ENCODE measurements at regions of chr6 and their contacts with region 1.

Region 1: GRCh38 chr6:30533460-30534294 is 22.6 kb downstream of the GNL1 start:
- DNase-seq: no peak
- H3K4me3 Mint-ChIP-seq: no peak overlapping the region
- H3K27ac Mint-ChIP-seq: no peak overlapping the region
- H3K4me1 Mint-ChIP-seq: peaks cover 35% of the 10 kb centered on the region
- H3K27me3 Mint-ChIP-seq: peaks cover 1% of the 10 kb centered on the region

Region 2: DNA sequence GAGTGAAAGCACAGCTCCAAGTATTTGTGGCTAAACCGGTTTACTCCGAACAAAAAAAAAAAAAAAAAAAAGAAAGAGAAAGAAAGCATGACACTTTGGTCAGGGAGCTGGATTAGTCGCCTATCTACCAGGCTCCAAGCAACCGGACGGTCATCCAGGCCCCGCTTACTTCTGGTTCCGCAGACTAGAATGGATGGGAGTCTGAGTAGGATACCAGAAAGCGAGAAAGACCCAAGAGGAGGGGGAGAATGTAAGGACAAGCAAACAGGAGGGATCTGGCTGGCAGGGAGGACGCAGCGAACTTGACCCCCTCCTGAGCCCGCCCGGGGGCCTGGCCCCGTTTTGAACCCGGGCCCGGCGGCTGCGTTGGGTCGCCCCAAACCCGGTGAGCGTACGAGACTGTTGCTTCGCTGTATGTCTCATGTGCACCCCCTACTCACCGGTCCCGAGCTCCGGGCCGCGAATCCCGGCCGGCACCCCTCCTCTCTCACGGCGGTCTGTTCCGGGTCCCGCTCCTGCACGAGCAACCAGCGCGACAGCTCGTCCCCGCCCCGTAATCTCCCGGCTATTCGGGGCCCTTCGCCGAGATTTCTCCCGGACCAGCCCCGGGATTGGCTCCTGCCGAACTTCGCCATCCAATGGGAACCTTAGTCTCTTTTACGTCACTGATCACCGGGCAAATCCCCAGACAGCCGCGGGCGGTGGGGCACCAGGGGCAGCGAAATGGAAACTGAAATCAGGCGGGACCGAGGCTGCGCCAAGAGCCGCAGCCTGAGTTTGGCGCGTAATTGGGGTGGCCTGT is 320.6 kb before region 1 on chr6 and contains the start of gene TRIM26:
- intact Hi-C with region 1: loop called (anchors 5 kb)
- DNase-seq: peak; percentile 98
- H3K4me3 Mint-ChIP-seq: peak within 1 kb of the TSS; percentile 96
- H3K27ac Mint-ChIP-seq: peak within 1 kb of the TSS; percentile 97
- H3K4me1 Mint-ChIP-seq: peaks cover 48% of the 10 kb centered on the region
- H3K27me3 Mint-ChIP-seq: no peaks in the 10 kb centered on the region
- total RNA-seq, gene TRIM26: 49.9 and 51.5 TPM in 2 replicates

Region 3: GRCh38 chr6:30304002-30304401 is 229.7 kb before region 1 on chr6:
- intact Hi-C with region 1: no loop called
- DNase-seq: no peak
- H3K4me3 Mint-ChIP-seq: no peak overlapping the region
- H3K27ac Mint-ChIP-seq: no peak overlapping the region
- H3K4me1 Mint-ChIP-seq: peaks cover 4% of the 10 kb centered on the region
- H3K27me3 Mint-ChIP-seq: no peaks in the 10 kb centered on the region

Region 4: DNA sequence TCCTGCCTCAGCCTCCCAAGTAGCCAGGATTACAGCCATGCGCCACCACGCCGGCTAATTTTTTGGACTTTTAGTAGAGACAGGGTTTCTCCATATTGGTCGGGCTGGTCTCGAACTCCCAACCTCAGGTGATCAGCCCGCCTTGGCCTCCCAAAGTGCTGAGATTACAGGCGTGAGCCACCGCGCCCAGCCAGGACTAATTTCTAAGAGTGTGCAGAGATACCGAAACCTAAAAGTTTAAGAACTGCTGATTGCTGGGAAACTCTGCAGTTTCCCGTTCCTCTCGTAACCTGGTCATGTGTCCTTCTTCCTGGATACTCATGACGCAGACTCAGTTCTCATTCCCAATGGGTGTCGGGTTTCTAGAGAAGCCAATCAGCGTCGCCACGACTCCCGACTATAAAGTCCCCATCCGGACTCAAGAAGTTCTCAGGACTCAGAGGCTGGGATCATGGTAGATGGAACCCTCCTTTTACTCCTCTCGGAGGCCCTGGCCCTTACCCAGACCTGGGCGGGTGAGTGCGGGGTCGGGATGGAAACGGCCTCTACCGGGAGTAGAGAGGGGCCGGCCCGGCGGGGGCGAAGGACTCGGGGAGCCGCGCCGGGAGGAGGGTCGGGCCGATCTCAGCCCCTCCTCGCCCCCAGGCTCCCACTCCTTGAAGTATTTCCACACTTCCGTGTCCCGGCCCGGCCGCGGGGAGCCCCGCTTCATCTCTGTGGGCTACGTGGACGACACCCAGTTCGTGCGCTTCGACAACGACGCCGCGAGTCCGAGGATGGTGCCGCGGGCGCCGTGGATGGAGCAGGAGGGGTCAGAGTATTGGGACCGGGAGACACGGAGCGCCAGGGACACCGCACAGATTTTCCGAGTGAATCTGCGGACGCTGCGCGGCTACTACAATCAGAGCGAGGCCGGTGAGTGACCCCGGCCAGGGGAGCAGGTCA is 44.3 kb before region 1 on chr6 and contains the start of gene HLA-E:
- intact Hi-C with region 1: loop called (anchors 1 kb)
- DNase-seq: peak; percentile 90
- H3K4me3 Mint-ChIP-seq: peak within 1 kb of the TSS; percentile 98
- H3K27ac Mint-ChIP-seq: peak within 1 kb of the TSS; percentile 97
- H3K4me1 Mint-ChIP-seq: peaks cover 51% of the 10 kb centered on the region
- H3K27me3 Mint-ChIP-seq: no peaks in the 10 kb centered on the region
- total RNA-seq, gene HLA-E: 358 and 360 TPM in 2 replicates

Region 5: DNA sequence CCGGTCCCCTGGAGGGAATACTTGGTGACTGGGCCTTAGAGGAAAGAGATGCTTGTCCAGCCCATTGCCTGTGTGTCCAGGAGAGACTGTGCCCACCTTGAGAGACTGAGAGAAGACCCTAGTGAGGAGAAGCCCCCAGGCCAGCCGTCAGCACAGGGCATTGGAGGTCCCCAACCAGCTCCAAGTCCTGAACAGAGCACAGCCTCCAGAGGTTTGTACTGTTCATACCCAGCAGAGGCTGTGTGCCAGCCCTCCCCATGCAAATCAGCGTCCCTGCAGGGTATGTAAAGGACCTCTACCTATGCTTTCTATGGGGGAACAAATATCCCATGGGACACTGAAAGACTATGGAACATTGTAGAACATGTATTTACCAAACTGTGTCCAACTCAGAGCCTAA is 36.0 kb before region 1 on chr6:
- intact Hi-C with region 1: loop called (anchors 1 kb)
- DNase-seq: no peak
- H3K4me3 Mint-ChIP-seq: no peak overlapping the region
- H3K27ac Mint-ChIP-seq: peak overlapping the region; percentile 2
- H3K4me1 Mint-ChIP-seq: peaks cover 57% of the 10 kb centered on the region
- H3K27me3 Mint-ChIP-seq: no peaks in the 10 kb centered on the region

Region 6: DNA sequence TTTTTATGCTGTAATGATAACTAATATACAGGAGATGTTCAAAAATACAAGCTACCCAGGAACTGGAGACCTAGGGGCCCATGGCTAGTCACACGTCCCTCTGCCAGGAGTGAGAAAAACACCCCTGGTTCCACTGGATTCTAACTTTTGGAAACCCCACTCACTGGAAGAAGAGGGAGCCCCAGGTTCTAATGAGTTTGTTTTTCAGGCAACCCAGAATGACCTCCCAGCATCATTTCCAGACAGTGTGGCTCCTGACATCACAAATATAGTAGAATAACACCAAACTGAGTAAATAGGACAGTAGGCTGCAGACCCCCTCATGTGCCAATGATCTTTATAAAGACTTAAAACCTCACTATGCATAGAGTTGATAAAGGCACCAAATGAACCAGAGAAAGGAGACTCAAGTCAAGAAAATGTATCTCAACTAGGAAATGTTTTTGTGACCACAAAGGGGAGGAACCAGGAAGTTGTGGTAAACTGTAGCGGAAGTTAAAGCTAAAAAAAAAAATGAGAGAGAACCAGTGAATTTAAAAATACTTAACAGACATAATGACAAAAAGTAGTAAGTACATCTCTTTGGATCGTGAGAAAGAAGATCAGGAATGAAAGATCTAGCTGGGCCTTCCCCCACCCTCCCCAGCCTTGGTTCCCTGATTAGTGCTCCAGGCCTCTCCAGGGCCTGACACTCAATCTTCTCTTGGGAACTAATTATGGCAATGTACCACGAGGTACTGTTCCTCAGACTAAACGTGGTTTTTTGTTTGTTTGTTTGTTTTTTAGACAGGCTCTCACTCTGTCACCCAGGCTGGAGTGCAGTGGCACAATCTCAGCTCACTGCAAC is 24.6 kb before region 1 on chr6:
- intact Hi-C with region 1: loop called (anchors 1 kb)
- DNase-seq: no peak
- H3K4me3 Mint-ChIP-seq: peak overlapping the region; percentile 23
- H3K27ac Mint-ChIP-seq: peak overlapping the region; percentile 82
- H3K4me1 Mint-ChIP-seq: peaks cover 43% of the 10 kb centered on the region
- H3K27me3 Mint-ChIP-seq: no peaks in the 10 kb centered on the region

Region 7: GRCh38 chr6:30515932-30516753 is 17.5 kb before region 1 on chr6:
- intact Hi-C with region 1: loop called (anchors 1 kb)
- DNase-seq: peak; percentile 90
- H3K4me3 Mint-ChIP-seq: peak overlapping the region; percentile 75
- H3K27ac Mint-ChIP-seq: peak overlapping the region; percentile 88
- H3K4me1 Mint-ChIP-seq: peaks cover 36% of the 10 kb centered on the region
- H3K27me3 Mint-ChIP-seq: no peaks in the 10 kb centered on the region

Region 8: GRCh38 chr6:30735668-30736314 is 202.1 kb after region 1 on chr6:
- intact Hi-C with region 1: loop called (anchors 5 kb)
- DNase-seq: no peak
- H3K4me3 Mint-ChIP-seq: peak overlapping the region; percentile 83
- H3K27ac Mint-ChIP-seq: peak overlapping the region; percentile 97
- H3K4me1 Mint-ChIP-seq: peaks cover 71% of the 10 kb centered on the region
- H3K27me3 Mint-ChIP-seq: no peaks in the 10 kb centered on the region